ENCODE measurements at regions of chr22 and their contacts with region 1.

Region 1: DNA sequence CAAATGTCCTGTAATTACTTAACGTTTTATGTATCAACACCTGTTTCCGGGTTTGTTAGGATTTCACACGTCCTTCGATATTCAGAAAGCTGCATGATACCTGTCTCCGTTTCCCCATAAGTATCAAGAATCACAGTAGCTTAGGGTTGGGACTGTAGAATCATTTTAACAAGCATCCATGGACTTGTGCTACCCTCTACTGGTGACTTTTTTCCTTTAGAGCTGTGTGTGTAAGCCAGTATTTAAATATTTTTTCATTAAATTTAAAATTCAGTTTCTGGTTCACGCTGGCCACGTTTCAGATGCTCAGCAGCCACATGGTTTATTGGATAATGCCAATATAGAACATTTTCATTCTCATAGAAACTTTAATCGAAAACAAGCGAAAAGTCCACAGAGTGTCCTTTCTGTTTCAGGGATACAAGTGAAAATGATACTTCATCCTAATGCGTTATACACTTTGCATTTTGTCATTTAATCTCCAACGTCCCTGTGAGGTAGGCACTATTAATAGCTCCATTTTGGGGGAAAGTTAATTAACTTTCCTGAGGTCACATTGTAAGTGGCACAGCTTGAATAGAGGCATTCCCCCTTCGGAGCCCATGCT is 61.5 kb upstream of the SLC25A18 start:
- DNase-seq: peak; percentile 70
- H3K4me3 ChIP-seq: no peak overlapping the region
- H3K27ac ChIP-seq: no peak overlapping the region
- H3K4me1 ChIP-seq: no peaks in the 10 kb centered on the region
- H3K27me3 ChIP-seq: no peaks in the 10 kb centered on the region; the same call in 1 of the 2 replicates

Region 2: DNA sequence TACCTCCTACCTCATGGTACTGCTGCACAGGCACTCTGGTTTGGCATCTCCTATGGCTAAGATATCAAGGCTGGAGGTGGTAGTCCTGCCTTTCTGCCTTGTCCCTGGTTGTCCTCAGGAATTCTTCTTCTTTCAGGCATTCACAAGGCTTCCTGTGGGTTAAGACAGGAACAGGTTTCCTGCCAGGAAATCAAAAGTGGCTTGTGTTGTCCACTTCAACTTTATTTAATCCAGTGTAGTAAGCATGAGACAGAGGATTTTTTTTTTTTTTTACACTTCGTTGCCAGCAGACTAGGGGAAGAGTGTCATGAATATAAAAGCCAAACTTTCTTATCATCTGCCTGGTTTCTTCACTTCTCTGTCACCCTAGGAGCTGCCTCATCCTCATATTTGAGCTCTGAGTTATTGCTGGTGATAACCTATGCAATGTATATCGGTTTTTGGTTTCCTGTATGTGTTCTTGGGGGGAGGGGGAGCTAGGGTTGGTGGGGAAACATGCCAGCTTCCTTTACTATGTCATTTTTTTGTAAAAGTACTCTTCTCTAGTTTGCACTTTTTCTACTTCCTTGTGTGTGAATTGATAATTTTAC is 726.8 kb before region 1 on chr22:
- in situ Hi-C with region 1: loop called (anchors 25 kb)
- DNase-seq: peak; percentile 4
- H3K4me3 ChIP-seq: no peak overlapping the region
- H3K27ac ChIP-seq: no peak overlapping the region
- H3K4me1 ChIP-seq: no peaks in the 10 kb centered on the region
- H3K27me3 ChIP-seq: no peaks in the 10 kb centered on the region; the same call in 1 of the 2 replicates

Region 3: DNA sequence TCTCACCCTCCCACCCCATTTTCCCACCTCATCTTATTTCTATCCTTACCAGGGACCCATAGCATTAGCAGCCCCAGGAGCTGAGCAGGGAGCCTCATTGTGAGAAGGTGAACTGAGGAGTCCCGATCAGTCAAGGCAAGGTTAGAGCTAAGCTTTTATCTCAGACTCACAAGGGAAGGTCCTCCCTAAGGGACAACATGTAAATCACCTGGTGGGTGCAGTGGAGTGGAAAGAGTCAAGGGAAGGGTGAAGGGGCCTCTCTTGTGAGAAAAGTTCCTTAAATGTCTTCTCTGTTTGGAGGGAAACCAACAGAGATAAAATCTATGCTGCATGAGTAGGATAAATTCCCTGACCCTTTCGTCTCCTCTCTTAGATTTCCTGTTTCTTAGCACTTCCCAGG is 579.7 kb before region 1 on chr22:
- in situ Hi-C with region 1: loop called (anchors 10 kb)
- DNase-seq: no peak
- H3K4me3 ChIP-seq: no peak overlapping the region
- H3K27ac ChIP-seq: no peak overlapping the region
- H3K4me1 ChIP-seq: peaks cover 3% of the 10 kb centered on the region
- H3K27me3 ChIP-seq: peaks cover 12% of the 10 kb centered on the region

Region 4: GRCh38 chr22:17077255-17077654 is 424.5 kb before region 1 on chr22:
- in situ Hi-C with region 1: loop called (anchors 10 kb)
- DNase-seq: peak; percentile 81
- H3K4me3 ChIP-seq: no peak overlapping the region
- H3K27ac ChIP-seq: peak overlapping the region; percentile 59
- H3K4me1 ChIP-seq: peaks cover 44% of the 10 kb centered on the region
- H3K27me3 ChIP-seq: no peaks in the 10 kb centered on the region

Region 5: GRCh38 chr22:17171313-17172171 is 330.2 kb before region 1 on chr22:
- in situ Hi-C with region 1: loop called (anchors 10 kb)
- DNase-seq: peak; percentile 94
- H3K4me3 ChIP-seq: peak overlapping the region; percentile 81
- H3K27ac ChIP-seq: peak overlapping the region; percentile 84
- H3K4me1 ChIP-seq: no peaks in the 10 kb centered on the region
- H3K27me3 ChIP-seq: no peaks in the 10 kb centered on the region

Region 6: DNA sequence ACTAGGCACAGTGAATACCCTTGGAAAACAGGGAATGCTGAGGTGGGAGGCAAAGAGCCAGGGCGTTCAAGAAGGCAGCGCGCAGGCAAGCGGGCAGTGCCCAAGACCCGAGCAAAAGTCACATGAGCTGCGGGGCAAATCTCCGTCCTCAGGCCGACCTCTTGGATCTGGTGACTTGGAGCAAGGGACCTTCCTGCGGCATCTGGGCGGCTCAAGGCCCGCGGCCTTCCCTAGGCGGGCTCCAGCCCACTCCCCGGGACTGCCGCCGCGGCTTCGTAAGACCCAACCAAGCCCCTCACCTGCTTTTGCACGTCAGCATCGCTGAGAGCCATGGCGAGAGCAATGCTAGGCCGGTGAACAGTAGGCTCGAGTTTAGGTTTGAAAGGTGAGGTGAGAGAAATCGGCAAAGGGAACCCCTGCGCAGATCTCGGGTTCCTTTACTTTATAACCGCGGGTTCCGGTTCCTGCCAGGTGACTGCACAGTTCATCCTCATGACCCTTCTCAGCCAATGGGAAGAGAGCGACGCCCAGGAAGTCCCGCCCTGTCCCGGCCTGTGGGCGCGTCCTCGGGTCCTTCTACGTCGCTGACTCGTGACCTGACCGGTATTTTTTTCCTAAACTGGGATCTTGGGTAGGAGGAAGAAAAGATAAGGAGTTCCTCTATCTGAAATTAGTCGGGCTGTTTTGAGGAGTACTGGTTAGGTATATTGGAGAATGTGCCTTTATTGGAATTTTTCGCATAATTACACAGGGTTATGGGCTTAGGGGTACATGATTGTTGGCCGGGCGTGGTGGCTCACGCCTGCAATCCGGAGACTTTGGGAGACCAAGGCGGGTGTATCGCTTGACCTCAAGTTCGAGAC is 126.8 kb after region 1 on chr22 and contains the start of gene ATP6V1E1:
- in situ Hi-C with region 1: no loop called
- DNase-seq: peak; percentile 99
- H3K4me3 ChIP-seq: peak within 1 kb of the TSS; percentile 96
- H3K27ac ChIP-seq: peak within 1 kb of the TSS; percentile 91
- H3K4me1 ChIP-seq: peaks cover 18% of the 10 kb centered on the region
- H3K27me3 ChIP-seq: no peaks in the 10 kb centered on the region
- total RNA-seq, gene ATP6V1E1: 103 and 113 TPM in 2 replicates

Measured in GM23248 (cell line).